ENCODE measurements at regions of chr12 and their contacts with region 1.

Region 1: DNA sequence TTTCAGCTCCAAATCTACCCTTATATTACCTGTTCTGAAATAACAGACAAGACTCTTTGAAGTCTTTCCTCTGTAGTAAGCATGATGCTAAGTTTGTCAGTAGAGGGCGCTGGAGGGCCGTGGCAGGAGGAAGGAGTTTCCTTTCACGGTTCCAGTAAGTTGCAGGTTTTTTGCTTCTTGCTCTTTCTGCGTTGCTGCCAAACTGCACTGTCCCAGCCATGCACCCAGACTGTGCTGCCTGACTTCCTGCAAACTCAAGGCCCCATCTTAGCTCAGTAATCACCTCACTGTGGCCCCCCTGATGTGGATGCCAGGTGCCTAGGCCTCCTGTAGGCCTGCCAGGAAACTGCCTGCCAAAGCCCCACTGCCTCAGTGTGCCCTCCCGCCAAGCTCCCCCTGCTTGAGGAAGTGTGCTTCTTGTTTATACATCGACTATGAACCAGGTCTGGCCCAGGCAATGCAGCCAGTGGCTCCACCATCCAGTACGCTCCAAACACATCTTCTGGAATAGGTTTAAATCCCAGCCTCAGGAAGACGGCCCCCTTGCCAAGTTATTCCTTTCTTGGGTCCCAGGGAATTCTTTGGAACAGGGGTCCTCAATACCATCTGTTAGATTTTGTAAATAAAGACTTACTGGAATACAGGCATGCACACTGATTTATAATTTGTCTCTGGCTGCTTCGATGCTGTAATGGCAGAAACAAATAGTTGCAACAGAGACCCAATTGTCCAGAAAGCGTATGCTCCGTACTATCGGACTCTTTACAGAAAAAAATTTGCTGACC is 193.7 kb upstream of the LRIG3 start:
- DNase-seq: peak; percentile 81
- ATAC-seq: peak; percentile 90
- H3K4me3 ChIP-seq: no peak overlapping the region
- H3K27ac ChIP-seq: no peak overlapping the region
- H3K4me1 ChIP-seq: peaks cover 2% of the 10 kb centered on the region; the same call in 1 of the 2 replicates
- H3K27me3 ChIP-seq: no peaks in the 10 kb centered on the region
- CTCF ChIP-seq: peak; percentile 93
- POLR2A ChIP-seq: no peak
- RAD21 ChIP-seq: peak; percentile 90

Region 2: GRCh38 chr12:59149997-59150642 is 36.1 kb after region 1 on chr12:
- CTCF ChIA-PET with region 1: interaction called, 21 read pairs
- POLR2A ChIA-PET with region 1: no interaction called
- dilution Hi-C with region 1: no loop called
- in situ Hi-C with region 1: no loop called
- intact Hi-C with region 1: loop called (anchors 1 kb)
- DNase-seq: peak; percentile 84
- ATAC-seq: peak; percentile 96
- H3K4me3 ChIP-seq: no peak overlapping the region
- H3K27ac ChIP-seq: peak overlapping the region; percentile 2; the same call in 1 of the 2 replicates
- H3K4me1 ChIP-seq: peaks cover 4% of the 10 kb centered on the region; the same call in 1 of the 2 replicates
- H3K27me3 ChIP-seq: no peaks in the 10 kb centered on the region
- CTCF ChIP-seq: peak; percentile 100
- POLR2A ChIP-seq: no peak
- RAD21 ChIP-seq: peak; percentile 83

Region 3: DNA sequence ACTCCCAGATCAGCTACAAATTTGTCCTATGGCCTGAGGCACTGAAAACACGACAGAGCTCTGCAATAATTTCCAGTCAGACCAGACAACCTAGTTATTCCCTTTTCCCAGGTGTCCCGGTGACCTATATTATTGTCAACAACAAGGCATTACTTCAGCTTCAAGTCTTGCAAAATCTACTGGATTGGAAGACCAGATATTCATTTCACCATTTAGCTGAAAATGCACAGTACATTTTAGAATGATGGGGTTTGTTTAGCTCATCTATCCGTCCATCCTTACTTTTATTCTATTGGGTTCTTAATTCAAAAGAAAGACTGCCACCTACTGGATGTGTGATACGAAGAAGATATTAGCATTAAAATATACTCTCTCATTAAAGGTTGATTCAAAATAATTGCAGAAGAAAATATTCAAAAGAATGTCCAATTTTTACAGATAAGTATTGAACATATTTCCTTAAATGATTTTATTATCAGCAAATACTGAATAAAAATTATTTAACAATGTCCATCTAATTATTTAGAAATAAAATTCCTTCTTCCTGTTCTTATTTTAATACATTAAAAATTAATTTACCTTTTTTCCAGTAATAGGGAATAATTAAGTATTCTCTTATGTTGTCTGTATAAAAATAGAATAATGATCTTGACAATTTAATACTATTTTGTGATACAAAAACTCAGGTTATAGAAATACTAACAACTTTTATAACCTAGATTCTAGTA is 51.1 kb after region 1 on chr12:
- CTCF ChIA-PET with region 1: interaction called, 9 read pairs
- POLR2A ChIA-PET with region 1: no interaction called
- dilution Hi-C with region 1: no loop called
- in situ Hi-C with region 1: no loop called
- intact Hi-C with region 1: loop called (anchors 1 kb)
- DNase-seq: peak; percentile 64
- ATAC-seq: peak; percentile 72; the same call in 1 of the 2 replicates
- H3K4me3 ChIP-seq: no peak overlapping the region
- H3K27ac ChIP-seq: no peak overlapping the region
- H3K4me1 ChIP-seq: peaks cover 2% of the 10 kb centered on the region; the same call in 1 of the 2 replicates
- H3K27me3 ChIP-seq: no peaks in the 10 kb centered on the region
- CTCF ChIP-seq: peak; percentile 61
- POLR2A ChIP-seq: no peak
- RAD21 ChIP-seq: peak; percentile 49

Region 4: DNA sequence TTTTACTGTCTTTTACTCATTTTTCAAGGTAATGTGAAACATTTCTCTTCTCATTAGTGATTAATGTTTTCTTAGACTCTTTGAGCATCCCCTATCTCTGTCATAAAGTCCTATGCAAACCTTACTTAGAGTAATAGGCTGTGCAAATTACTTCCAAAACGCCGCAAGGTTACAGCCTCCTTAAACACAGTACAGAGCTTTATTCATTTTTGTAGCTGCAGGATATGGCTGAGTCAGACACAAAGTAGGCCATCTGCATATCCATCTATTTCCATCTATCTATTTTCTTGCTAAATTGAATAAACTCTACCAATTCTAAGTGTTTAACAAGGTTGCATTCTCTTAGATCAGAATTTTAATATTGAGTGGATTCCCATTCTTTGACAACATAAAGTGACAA is 146.2 kb after region 1 on chr12:
- CTCF ChIA-PET with region 1: no interaction called
- POLR2A ChIA-PET with region 1: no interaction called
- dilution Hi-C with region 1: no loop called
- in situ Hi-C with region 1: no loop called
- intact Hi-C with region 1: no loop called
- DNase-seq: no peak
- ATAC-seq: no peak
- H3K4me3 ChIP-seq: no peak overlapping the region
- H3K27ac ChIP-seq: no peak overlapping the region
- H3K4me1 ChIP-seq: no peaks in the 10 kb centered on the region
- H3K27me3 ChIP-seq: no peaks in the 10 kb centered on the region
- CTCF ChIP-seq: no peak
- POLR2A ChIP-seq: no peak
- RAD21 ChIP-seq: no peak

Region 5: DNA sequence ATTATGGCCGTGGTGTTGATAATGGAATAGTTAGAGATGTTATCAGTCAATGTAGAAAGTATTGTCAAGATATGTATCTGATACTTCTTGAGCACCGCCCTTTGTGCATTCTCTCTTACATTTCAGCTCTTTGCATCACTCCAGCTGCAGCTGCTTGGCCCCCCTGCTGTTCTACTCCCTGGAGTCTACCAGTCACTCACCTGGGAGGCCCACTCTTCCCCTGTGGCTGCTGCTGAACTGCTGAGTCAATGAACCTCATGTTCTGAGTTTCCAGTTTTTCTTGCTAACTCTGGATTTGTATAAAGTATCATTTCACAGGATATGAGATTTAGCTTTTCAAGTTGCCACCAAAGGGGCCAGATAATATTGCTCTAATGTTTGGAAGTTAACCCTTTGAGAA is 169.0 kb after region 1 on chr12:
- CTCF ChIA-PET with region 1: no interaction called
- POLR2A ChIA-PET with region 1: no interaction called
- dilution Hi-C with region 1: no loop called
- in situ Hi-C with region 1: no loop called
- intact Hi-C with region 1: no loop called
- DNase-seq: no peak
- ATAC-seq: no peak
- H3K4me3 ChIP-seq: no peak overlapping the region
- H3K27ac ChIP-seq: no peak overlapping the region
- H3K4me1 ChIP-seq: no peaks in the 10 kb centered on the region
- H3K27me3 ChIP-seq: no peaks in the 10 kb centered on the region
- CTCF ChIP-seq: no peak
- POLR2A ChIP-seq: no peak
- RAD21 ChIP-seq: no peak

Region 6: DNA sequence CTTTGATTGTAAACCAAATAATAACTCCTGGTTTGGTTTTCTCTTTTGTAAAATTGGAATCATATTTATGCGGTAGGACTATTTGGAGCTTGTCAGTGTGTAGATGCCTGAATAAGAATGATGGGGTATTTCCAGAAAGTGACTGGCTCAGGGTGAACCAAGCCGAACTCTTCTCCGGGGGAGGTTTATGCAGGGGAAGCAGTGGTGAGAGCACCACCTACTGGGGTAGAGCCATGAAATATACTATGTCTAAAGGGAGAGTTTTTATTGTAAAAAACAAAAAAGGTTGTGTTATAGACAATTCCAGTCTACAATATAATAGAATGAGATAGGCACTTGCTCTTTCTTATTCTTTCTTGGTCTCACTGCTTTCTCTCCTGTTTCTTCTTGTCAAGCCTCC is 258.9 kb after region 1 on chr12:
- CTCF ChIA-PET with region 1: no interaction called
- POLR2A ChIA-PET with region 1: no interaction called
- dilution Hi-C with region 1: no loop called
- in situ Hi-C with region 1: no loop called
- intact Hi-C with region 1: loop called (anchors 5 kb)
- DNase-seq: peak; percentile 21
- ATAC-seq: peak; percentile 95
- H3K4me3 ChIP-seq: no peak overlapping the region
- H3K27ac ChIP-seq: no peak overlapping the region
- H3K4me1 ChIP-seq: no peaks in the 10 kb centered on the region
- H3K27me3 ChIP-seq: no peaks in the 10 kb centered on the region
- CTCF ChIP-seq: peak; percentile 46
- POLR2A ChIP-seq: no peak
- RAD21 ChIP-seq: peak; percentile 44

Region 7: GRCh38 chr12:59548930-59549329 is 434.9 kb after region 1 on chr12:
- CTCF ChIA-PET with region 1: no interaction called
- POLR2A ChIA-PET with region 1: no interaction called
- dilution Hi-C with region 1: no loop called
- in situ Hi-C with region 1: no loop called
- intact Hi-C with region 1: no loop called
- DNase-seq: no peak
- ATAC-seq: no peak
- H3K4me3 ChIP-seq: no peak overlapping the region
- H3K27ac ChIP-seq: no peak overlapping the region
- H3K4me1 ChIP-seq: no peaks in the 10 kb centered on the region
- H3K27me3 ChIP-seq: no peaks in the 10 kb centered on the region
- CTCF ChIP-seq: no peak
- POLR2A ChIP-seq: no peak
- RAD21 ChIP-seq: no peak